ENCODE measurements at regions of chr5 and their contacts with region 1.

Region 1: GRCh38 chr5:160089531-160089930 is 29.7 kb downstream of the PWWP2A start:
- DNase-seq: no peak
- H3K4me3 ChIP-seq: no peak overlapping the region
- H3K27ac ChIP-seq: peak overlapping the region; percentile 5
- H3K4me1 ChIP-seq: peaks cover 17% of the 10 kb centered on the region
- H3K27me3 ChIP-seq: no peaks in the 10 kb centered on the region
- CTCF ChIP-seq: no peak
- POLR2A ChIP-seq: no peak

Region 2: GRCh38 chr5:160030631-160031377 is 58.7 kb before region 1 on chr5:
- CTCF ChIA-PET with region 1: no interaction called
- POLR2A ChIA-PET with region 1: no interaction called
- dilution Hi-C with region 1: no loop called
- intact Hi-C with region 1: no loop called
- DNase-seq: no peak
- H3K4me3 ChIP-seq: no peak overlapping the region
- H3K27ac ChIP-seq: no peak overlapping the region
- H3K4me1 ChIP-seq: peaks cover 6% of the 10 kb centered on the region
- H3K27me3 ChIP-seq: no peaks in the 10 kb centered on the region
- CTCF ChIP-seq: no peak
- POLR2A ChIP-seq: no peak

Region 3: GRCh38 chr5:160071516-160071915 is 18.0 kb before region 1 on chr5:
- CTCF ChIA-PET with region 1: no interaction called
- POLR2A ChIA-PET with region 1: no interaction called
- dilution Hi-C with region 1: no loop called
- intact Hi-C with region 1: no loop called
- DNase-seq: no peak
- H3K4me3 ChIP-seq: no peak overlapping the region
- H3K27ac ChIP-seq: peak overlapping the region; percentile 31
- H3K4me1 ChIP-seq: peaks cover 23% of the 10 kb centered on the region
- H3K27me3 ChIP-seq: no peaks in the 10 kb centered on the region
- CTCF ChIP-seq: no peak
- POLR2A ChIP-seq: no peak

Region 4: DNA sequence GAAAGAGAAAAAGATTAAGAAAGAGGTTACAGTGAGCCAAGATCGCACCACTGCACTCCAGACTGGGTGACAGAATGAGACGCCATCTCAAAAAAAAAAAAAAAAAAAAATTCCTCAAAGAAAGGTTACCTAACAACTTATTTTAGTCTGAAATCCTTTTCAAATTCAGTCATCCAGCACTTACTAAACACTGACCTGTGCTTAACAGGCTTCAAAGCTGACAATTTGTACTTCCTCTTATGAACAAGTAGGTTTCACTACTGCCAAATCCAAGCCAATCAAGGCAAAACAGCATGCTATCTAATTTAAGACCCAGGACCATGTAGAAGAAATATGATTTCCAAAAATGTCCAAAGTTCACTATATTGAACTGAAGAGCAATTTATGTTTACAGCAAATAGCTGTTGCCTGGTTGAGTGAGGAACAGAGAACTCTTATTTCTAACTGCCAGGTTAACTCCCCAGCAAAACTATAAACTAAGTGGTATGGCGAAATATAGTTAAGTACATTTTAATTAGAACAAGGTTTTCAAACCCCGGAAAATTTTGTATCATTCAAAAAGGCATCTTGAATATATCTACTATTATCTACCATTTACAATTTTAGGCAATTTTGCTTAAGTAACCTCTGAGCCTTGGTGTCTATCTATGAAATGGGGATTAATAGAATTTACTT is 16.3 kb after region 1 on chr5:
- CTCF ChIA-PET with region 1: interaction called, 3 read pairs
- POLR2A ChIA-PET with region 1: no interaction called
- dilution Hi-C with region 1: no loop called
- intact Hi-C with region 1: loop called (anchors 2 kb)
- DNase-seq: no peak
- H3K4me3 ChIP-seq: no peak overlapping the region
- H3K27ac ChIP-seq: no peak overlapping the region
- H3K4me1 ChIP-seq: peaks cover 10% of the 10 kb centered on the region
- H3K27me3 ChIP-seq: no peaks in the 10 kb centered on the region
- CTCF ChIP-seq: no peak
- POLR2A ChIP-seq: no peak

Region 5: GRCh38 chr5:160133071-160133917 is 43.8 kb after region 1 on chr5:
- CTCF ChIA-PET with region 1: no interaction called
- POLR2A ChIA-PET with region 1: no interaction called
- dilution Hi-C with region 1: no loop called
- intact Hi-C with region 1: no loop called
- DNase-seq: peak; percentile 9
- H3K4me3 ChIP-seq: no peak overlapping the region
- H3K27ac ChIP-seq: no peak overlapping the region
- H3K4me1 ChIP-seq: peaks cover 4% of the 10 kb centered on the region
- H3K27me3 ChIP-seq: no peaks in the 10 kb centered on the region
- CTCF ChIP-seq: no peak
- POLR2A ChIP-seq: no peak